K562 (cell line): ENCODE measurements at regions of chr19 and their contacts with region 1.

Region 1: GRCh38 chr19:4144666-4145256 is 8.7 kb upstream of the CREB3L3 start:
- DNase-seq: peak; percentile 34 to 60 (median 46)
- ATAC-seq: no peak
- H3K4me3 ChIP-seq: no peak overlapping the region
- H3K27ac ChIP-seq: no peak overlapping the region
- H3K4me1 ChIP-seq: peaks cover 7 to 30% of the 10 kb centered on the region in 2 experiments; a peak in 4 of 5 replicates
- H3K27me3 ChIP-seq: no peaks in the 10 kb centered on the region
- CTCF ChIP-seq: no peak
- EP300 ChIP-seq: no peak
- POLR2A ChIP-seq: no peak
- RAD21 ChIP-seq: no peak

Region 2: DNA sequence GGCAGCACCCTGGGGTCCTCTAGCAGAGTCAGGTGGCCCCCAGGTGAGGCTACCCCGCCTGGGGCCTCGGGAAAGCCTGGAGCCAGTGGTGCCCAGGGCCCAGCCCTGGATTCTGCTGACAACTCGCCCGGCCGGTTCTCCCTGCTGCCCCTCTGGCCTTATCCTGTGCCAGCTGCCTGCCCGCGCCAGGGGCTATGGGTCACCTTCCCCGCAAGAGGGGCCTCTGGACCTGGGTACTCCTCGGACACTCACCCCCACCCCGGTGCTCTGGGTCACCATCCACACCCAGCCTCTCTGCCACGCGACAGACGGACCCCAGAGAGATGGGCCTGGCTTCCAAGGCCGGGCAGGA is 102.1 kb before region 1 on chr19:
- CTCF ChIA-PET with region 1: no interaction called
- POLR2A ChIA-PET with region 1: no interaction called
- in situ Hi-C with region 1: no loop called
- intact Hi-C with region 1: no loop called
- DNase-seq: no peak
- ATAC-seq: no peak; the same call in 2 of the 3 replicates
- H3K4me3 ChIP-seq: no peak overlapping the region
- H3K27ac ChIP-seq: no peak overlapping the region
- H3K4me1 ChIP-seq: peaks cover 0 to 31% of the 10 kb centered on the region in 2 experiments; a peak in 2 of 5 replicates
- H3K27me3 ChIP-seq: no peaks in the 10 kb centered on the region
- CTCF ChIP-seq: no peak
- EP300 ChIP-seq: no peak
- POLR2A ChIP-seq: no peak
- RAD21 ChIP-seq: no peak

Region 3: GRCh38 chr19:4182084-4182810 is 37.5 kb after region 1 on chr19 and contains the starts of genes ANKRD24 and SIRT6:
- CTCF ChIA-PET with region 1: no interaction called
- POLR2A ChIA-PET with region 1: interaction called, 3 read pairs
- in situ Hi-C with region 1: no loop called
- intact Hi-C with region 1: loop called (anchors 1 kb)
- DNase-seq: peak; percentile 98 to 99 (median 99)
- ATAC-seq: peak; percentile 83
- H3K4me3 ChIP-seq: peak within 1 kb of the TSS; percentile 84
- H3K27ac ChIP-seq: peak within 1 kb of the TSS; percentile 73
- H3K4me1 ChIP-seq: peaks cover 17 to 49% of the 10 kb centered on the region in 2 experiments
- H3K27me3 ChIP-seq: no peaks in the 10 kb centered on the region
- CTCF ChIP-seq: no peak
- EP300 ChIP-seq: peak; percentile 68
- POLR2A ChIP-seq: peak; percentile 79
- RAD21 ChIP-seq: no peak
- polyA plus RNA-seq, gene ANKRD24: not detected
- polyA plus RNA-seq, gene SIRT6: 1.4 to 1.8 TPM